ENCODE measurements at regions of chr17 and their contacts with region 1.

Region 1: DNA sequence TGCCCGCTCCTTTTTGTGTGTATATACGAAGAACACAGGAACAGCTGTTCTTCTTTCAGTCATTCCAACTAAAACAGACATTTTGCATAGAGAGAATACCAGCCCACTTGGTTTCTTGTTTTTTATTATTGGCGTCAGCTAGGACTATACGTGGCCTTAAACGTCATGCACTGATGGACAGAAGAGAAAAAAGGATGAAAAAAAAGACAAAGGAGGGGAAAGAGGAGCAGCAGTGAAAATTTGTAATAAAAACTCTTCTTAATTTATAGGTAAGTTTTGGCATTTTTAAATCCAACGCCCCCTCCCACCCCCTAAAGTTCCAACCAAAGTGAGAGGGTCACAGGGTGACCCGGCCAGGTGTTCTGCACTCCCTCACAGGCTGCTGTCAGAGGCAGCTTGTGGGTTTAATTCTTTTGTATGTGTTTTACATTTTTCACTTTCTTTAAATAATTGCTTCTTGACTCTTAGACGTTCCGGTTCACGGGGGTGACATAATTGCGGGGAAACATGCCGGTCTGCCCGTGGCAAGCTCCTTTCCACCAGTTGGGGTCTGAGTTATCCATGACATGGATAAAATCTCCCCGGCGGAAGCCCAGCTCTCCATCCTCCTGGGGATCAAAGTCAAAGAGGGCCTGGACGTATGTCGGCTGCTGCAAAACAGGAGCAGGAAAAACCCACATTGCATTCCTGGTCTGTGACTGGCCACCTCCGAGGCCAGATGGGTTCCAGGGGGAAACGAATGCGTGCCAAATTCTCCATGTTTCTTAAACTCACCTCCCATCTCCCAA is 30.9 kb upstream of the SLC25A19 start:
- DNase-seq: no peak
- ATAC-seq: no peak
- H3K4me3 Mint-ChIP-seq: no peak overlapping the region
- H3K27ac Mint-ChIP-seq: no peak overlapping the region
- H3K4me1 Mint-ChIP-seq: peaks cover 21% of the 10 kb centered on the region
- H3K27me3 Mint-ChIP-seq: no peaks in the 10 kb centered on the region

Region 2: DNA sequence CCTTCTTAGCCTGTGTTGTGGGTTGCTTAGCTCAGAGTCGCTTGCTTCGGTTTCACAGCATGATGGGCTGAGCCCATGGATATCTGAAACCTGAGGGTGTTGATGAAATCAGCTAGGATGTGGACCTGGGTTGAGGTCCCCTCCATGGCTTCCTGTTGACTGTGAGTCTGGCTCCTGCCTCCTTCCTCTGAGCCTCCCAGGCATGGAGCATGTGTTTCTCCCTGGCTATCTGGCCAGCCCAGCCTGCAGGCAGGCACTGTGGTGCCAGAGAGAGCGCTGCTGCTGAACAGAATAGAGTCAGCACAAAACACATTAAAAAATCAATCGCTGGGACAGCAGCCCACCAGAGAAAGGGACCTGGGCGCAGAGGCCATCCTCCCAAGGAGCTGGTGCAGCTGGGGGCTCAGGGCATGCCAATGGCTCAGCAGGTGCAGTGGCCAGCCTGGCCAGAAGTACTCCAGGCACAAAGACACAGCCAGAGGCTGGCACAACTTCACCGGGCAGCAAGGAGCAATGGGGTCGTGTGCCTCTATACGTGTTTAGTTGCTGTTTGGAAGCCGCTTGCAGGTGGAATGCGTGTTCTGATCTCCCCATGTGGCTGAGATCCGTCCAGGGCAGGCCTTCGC is 916.5 kb before region 1 on chr17:
- CTCF ChIA-PET with region 1: no interaction called
- POLR2A ChIA-PET with region 1: no interaction called
- intact Hi-C with region 1: no loop called
- DNase-seq: no peak
- ATAC-seq: no peak
- H3K4me3 Mint-ChIP-seq: no peak overlapping the region
- H3K27ac Mint-ChIP-seq: no peak overlapping the region
- H3K4me1 Mint-ChIP-seq: no peaks in the 10 kb centered on the region
- H3K27me3 Mint-ChIP-seq: no peaks in the 10 kb centered on the region

Region 3: DNA sequence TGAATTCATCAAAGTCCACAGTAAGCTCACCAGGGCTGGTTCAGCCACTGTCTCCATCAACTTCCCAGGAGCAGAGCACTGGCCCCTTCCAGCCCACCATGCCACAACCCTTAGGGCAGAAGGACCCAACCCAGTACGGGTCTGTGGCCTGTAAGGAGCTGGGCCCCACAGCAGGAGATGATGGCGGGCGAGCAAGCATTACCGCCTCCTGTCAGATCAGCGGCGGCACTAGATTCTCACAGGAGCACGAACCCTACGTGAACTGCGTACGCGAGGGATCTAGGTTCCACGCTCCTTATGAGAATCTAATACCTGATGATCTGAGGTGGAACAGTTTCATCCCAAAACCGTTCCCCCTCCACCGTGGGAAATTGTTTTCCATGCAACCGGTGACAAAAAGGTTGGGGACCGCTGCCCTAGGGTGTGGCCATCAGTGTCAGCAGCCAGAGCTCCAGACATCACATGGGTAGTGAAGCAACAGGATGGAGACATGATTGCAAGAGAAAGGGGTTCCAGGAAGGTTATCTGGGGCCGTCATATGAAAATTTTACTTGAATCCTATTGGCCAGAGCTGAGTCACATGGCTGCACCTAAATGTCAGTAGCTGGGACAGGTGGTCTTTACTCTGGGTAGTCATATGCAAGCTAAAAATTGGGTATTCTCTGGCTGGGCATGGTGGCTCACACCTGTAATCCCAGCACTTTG is 18.4 kb before region 1 on chr17:
- CTCF ChIA-PET with region 1: interaction called, 13 read pairs
- POLR2A ChIA-PET with region 1: interaction called, 3 read pairs
- intact Hi-C with region 1: no loop called
- DNase-seq: no peak
- ATAC-seq: no peak
- H3K4me3 Mint-ChIP-seq: no peak overlapping the region
- H3K27ac Mint-ChIP-seq: no peak overlapping the region
- H3K4me1 Mint-ChIP-seq: peaks cover 14% of the 10 kb centered on the region
- H3K27me3 Mint-ChIP-seq: no peaks in the 10 kb centered on the region

Region 4: GRCh38 chr17:75338335-75338734 is 18.2 kb after region 1 on chr17:
- CTCF ChIA-PET with region 1: interaction called, 24 read pairs
- POLR2A ChIA-PET with region 1: no interaction called
- intact Hi-C with region 1: loop called in 1 of 2 experiments (anchors 2 kb)
- DNase-seq: peak; percentile 38
- ATAC-seq: peak; percentile 33
- H3K4me3 Mint-ChIP-seq: peak overlapping the region; percentile 65
- H3K27ac Mint-ChIP-seq: peak overlapping the region; percentile 96
- H3K4me1 Mint-ChIP-seq: peaks cover 82% of the 10 kb centered on the region
- H3K27me3 Mint-ChIP-seq: no peaks in the 10 kb centered on the region

Region 5: GRCh38 chr17:75371339-75371738 is 51.2 kb after region 1 on chr17:
- CTCF ChIA-PET with region 1: interaction called, 7 read pairs
- POLR2A ChIA-PET with region 1: no interaction called
- intact Hi-C with region 1: loop called in 1 of 2 experiments (anchors 2 kb)
- DNase-seq: no peak
- ATAC-seq: peak; percentile 24
- H3K4me3 Mint-ChIP-seq: peak overlapping the region; percentile 56
- H3K27ac Mint-ChIP-seq: peak overlapping the region; percentile 82
- H3K4me1 Mint-ChIP-seq: peaks cover 78% of the 10 kb centered on the region
- H3K27me3 Mint-ChIP-seq: no peaks in the 10 kb centered on the region

Region 6: GRCh38 chr17:75393523-75394331 is 73.6 kb after region 1 on chr17:
- CTCF ChIA-PET with region 1: interaction called, 70 read pairs
- POLR2A ChIA-PET with region 1: interaction called, 6 read pairs
- intact Hi-C with region 1: loop called in 1 of 2 experiments (anchors 2 kb)
- DNase-seq: peak; percentile 91
- ATAC-seq: peak; percentile 91
- H3K4me3 Mint-ChIP-seq: peak overlapping the region; percentile 91
- H3K27ac Mint-ChIP-seq: peak overlapping the region; percentile 71
- H3K4me1 Mint-ChIP-seq: peaks cover 75% of the 10 kb centered on the region
- H3K27me3 Mint-ChIP-seq: no peaks in the 10 kb centered on the region

Measured in activated CD4-positive, alpha-beta T cell treated with anti-CD3 and anti-CD28 coated beads for 36 hours (primary cell).